Tibial artery (tissue), 4 donors: ENCODE measurements at regions of chr10 and their contacts with region 1.

Region 1: GRCh38 chr10:17001961-17002749 is 127.5 kb downstream of the CUBN start:
- DNase-seq: peak; percentile 55 to 80
- H3K4me3 ChIP-seq: peak overlapping the region; percentile 1 to 6
- H3K27ac ChIP-seq: peak overlapping the region; percentile 65 to 81
- H3K4me1 ChIP-seq: peaks cover 0 to 60% (median 25%) of the 10 kb centered on the region in 4 donors
- H3K27me3 ChIP-seq: no peaks in the 10 kb centered on the region
- CTCF ChIP-seq: no peak

Region 2: GRCh38 chr10:16944402-16944801 is 57.8 kb before region 1 on chr10:
- intact Hi-C with region 1: no loop called
- DNase-seq: no peak
- H3K4me3 ChIP-seq: no peak overlapping the region
- H3K27ac ChIP-seq: peak overlapping the region; percentile 69 to 73
- H3K4me1 ChIP-seq: peaks cover 0 to 32% (median 8%) of the 10 kb centered on the region in 4 donors
- H3K27me3 ChIP-seq: no peaks in the 10 kb centered on the region
- CTCF ChIP-seq: no peak

Region 3: GRCh38 chr10:17075533-17076359 is 73.6 kb after region 1 on chr10:
- intact Hi-C with region 1: loop called (anchors 10 kb)
- DNase-seq: peak in 1 of 2 donors; percentile 32
- H3K4me3 ChIP-seq: no peak overlapping the region
- H3K27ac ChIP-seq: peak overlapping the region; percentile 74 to 77
- H3K4me1 ChIP-seq: peaks cover 0 to 30% (median 13%) of the 10 kb centered on the region in 4 donors
- H3K27me3 ChIP-seq: no peaks in the 10 kb centered on the region
- CTCF ChIP-seq: no peak

Region 4: DNA sequence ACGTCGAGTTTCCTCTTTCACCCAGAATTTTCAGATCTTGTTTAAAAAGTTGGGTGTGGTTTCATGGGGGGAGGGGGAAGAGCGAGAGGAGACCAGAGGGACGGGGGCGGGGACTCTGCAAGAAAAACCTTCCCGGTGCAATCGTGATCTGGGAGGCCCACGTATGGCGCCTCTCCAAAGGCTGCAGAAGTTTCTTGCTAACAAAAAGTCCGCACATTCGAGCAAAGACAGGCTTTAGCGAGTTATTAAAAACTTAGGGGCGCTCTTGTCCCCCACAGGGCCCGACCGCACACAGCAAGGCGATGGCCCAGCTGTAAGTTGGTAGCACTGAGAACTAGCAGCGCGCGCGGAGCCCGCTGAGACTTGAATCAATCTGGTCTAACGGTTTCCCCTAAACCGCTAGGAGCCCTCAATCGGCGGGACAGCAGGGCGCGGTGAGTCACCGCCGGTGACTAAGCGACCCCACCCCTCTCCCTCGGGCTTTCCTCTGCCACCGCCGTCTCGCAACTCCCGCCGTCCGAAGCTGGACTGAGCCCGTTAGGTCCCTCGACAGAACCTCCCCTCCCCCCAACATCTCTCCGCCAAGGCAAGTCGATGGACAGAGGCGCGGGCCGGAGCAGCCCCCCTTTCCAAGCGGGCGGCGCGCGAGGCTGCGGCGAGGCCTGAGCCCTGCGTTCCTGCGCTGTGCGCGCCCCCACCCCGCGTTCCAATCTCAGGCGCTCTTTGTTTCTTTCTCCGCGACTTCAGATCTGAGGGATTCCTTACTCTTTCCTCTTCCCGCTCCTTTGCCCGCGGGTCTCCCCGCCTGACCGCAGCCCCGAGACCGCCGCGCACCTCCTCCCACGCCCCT is 226.2 kb after region 1 on chr10 and contains the start of gene VIM:
- intact Hi-C with region 1: loop called (anchors 10 kb)
- DNase-seq: peak; percentile 97 to 99
- H3K4me3 ChIP-seq: peak within 1 kb of the TSS; percentile 83 to 93
- H3K27ac ChIP-seq: peak within 1 kb of the TSS; percentile 98 to 100
- H3K4me1 ChIP-seq: peaks cover 0 to 39% (median 21%) of the 10 kb centered on the region in 4 donors
- H3K27me3 ChIP-seq: no peaks in the 10 kb centered on the region
- CTCF ChIP-seq: peak in 1 of 2 experiments; percentile 26